Breast epithelium (tissue), 4 donors: ENCODE measurements at regions of chr13 and their contacts with region 1.

Region 1: GRCh38 chr13:113914333-113915011 is 50.6 kb upstream of the GAS6 start:
- DNase-seq: peak; percentile 11 to 27
- H3K4me3 ChIP-seq: no peak overlapping the region
- H3K27ac ChIP-seq: no peak overlapping the region
- H3K4me1 ChIP-seq: no peaks in the 10 kb centered on the region
- H3K27me3 ChIP-seq: peaks cover 0 to 15% of the 10 kb centered on the region in 2 donors
- CTCF ChIP-seq: no peak
- POLR2A ChIP-seq: no peak

Region 2: DNA sequence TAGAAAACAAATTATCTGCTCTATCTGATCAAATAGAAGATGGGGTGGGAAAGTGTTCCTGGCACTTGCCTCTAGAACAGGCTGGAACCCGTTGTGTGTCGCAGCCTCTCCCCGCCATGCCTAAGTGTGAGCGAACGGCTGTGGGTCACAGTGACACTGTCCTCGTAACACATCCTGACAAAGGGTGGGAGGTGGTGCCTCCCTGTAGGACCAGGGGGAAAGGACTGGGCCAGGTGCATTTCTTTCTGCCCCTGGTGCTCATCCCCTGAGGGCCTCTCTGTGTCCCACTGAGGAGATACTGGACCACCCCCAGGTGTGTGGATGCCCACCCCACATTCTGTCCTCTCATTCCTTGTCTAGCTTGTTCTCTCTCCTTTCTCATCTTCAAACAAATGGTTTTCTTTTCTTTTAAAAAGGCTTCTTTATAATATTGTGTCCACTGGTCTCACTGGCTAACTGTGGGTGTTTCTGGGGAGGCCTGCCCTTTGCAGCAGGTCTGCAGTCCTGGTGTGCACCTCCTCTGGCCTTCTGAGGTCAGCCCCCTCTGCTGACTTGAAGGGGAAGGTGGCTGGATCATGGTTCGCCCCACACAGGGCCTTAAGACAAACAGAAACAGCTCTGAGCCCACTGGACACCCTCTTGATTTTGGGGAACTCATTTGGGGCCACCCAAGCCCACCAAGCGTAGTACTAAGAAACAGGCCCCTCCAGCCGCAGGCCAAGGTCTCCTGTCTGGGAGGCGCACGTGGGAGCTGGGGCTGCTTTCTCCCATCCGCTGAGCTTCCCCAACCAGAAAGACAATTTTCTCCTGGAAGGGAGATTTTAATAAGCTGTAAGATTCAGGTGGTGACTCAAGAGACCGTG is 2000.0 kb before region 1 on chr13:
- intact Hi-C with region 1: no loop called
- DNase-seq: no peak
- H3K4me3 ChIP-seq: no peak overlapping the region
- H3K27ac ChIP-seq: no peak overlapping the region
- H3K4me1 ChIP-seq: no peaks in the 10 kb centered on the region
- H3K27me3 ChIP-seq: peaks cover 0 to 26% of the 10 kb centered on the region in 2 donors
- CTCF ChIP-seq: no peak
- POLR2A ChIP-seq: no peak

Region 3: DNA sequence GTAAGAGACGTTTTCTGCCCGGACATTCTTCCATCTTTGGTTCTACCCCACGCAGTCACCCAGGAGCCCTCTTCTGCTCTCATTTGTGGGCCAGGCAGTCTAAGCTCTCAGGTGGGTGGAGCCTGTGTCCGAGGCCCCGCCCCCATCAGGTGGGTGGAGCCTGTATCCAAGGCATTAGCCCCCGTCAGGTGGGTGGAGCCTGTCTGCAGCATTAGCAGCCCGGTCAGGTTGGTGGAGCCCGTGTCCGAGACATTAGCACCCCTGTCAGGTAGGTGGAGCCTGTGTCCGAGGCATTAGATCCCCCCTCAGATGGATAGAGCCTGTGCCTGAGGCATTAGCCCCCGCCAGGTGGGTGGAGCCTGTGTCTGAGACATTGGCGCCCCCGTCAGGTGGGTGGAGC is 104.9 kb after region 1 on chr13:
- intact Hi-C with region 1: loop called (anchors 5 kb)
- DNase-seq: no peak
- H3K4me3 ChIP-seq: no peak overlapping the region
- H3K27ac ChIP-seq: no peak overlapping the region
- H3K4me1 ChIP-seq: no peaks in the 10 kb centered on the region
- H3K27me3 ChIP-seq: no peaks in the 10 kb centered on the region
- CTCF ChIP-seq: no peak
- POLR2A ChIP-seq: no peak